AG04450 (cell line): ENCODE measurements at regions of chr14 and their contacts with region 1.

Region 1: GRCh38 chr14:20530771-20531571 is 25.6 kb downstream of the RNASE10 start:
- DNase-seq: peak; percentile 50
- H3K4me3 ChIP-seq: no peak overlapping the region
- H3K27ac ChIP-seq: no peak overlapping the region
- H3K27me3 ChIP-seq: peaks cover 4% of the 10 kb centered on the region
- CTCF ChIP-seq: peak; percentile 72

Region 2: GRCh38 chr14:20356422-20356821 is 174.5 kb before region 1 on chr14:
- CTCF ChIA-PET with region 1: no interaction called
- POLR2A ChIA-PET with region 1: no interaction called
- DNase-seq: no peak
- H3K4me3 ChIP-seq: no peak overlapping the region
- H3K27ac ChIP-seq: no peak overlapping the region
- H3K27me3 ChIP-seq: no peaks in the 10 kb centered on the region
- CTCF ChIP-seq: no peak

Region 3: DNA sequence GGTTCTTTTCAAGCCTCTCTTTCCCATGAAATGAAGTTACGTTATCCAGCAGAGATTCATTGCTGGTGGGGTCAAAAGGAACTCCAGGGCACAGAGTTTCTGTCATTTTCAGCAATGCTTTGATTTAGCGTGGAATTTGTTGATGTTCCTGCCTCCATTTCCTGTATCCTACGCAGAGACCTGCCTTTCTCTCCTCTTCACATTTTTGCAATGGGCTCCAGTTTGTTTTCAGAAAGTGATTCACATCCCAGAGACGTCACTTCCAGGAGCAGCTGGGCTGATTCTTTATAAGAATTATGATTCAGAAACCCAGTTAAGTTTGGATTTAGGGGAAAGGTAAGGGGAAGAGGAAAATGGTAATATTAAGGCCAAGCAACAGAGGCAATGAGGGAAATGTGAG is 14.1 kb before region 1 on chr14:
- CTCF ChIA-PET with region 1: interaction called, 14 read pairs
- POLR2A ChIA-PET with region 1: no interaction called
- DNase-seq: peak; percentile 54
- H3K4me3 ChIP-seq: no peak overlapping the region
- H3K27ac ChIP-seq: peak overlapping the region; percentile 96
- H3K27me3 ChIP-seq: no peaks in the 10 kb centered on the region
- CTCF ChIP-seq: no peak

Region 4: GRCh38 chr14:20690848-20691523 is 160.0 kb after region 1 on chr14:
- CTCF ChIA-PET with region 1: interaction called, 35 read pairs
- POLR2A ChIA-PET with region 1: no interaction called
- DNase-seq: no peak
- H3K4me3 ChIP-seq: no peak overlapping the region
- H3K27ac ChIP-seq: no peak overlapping the region
- H3K27me3 ChIP-seq: no peaks in the 10 kb centered on the region
- CTCF ChIP-seq: peak; percentile 91